Common myeloid progenitor, CD34-positive (primary cell): ENCODE measurements at regions of chr12 and their contacts with region 1.

Region 1: DNA sequence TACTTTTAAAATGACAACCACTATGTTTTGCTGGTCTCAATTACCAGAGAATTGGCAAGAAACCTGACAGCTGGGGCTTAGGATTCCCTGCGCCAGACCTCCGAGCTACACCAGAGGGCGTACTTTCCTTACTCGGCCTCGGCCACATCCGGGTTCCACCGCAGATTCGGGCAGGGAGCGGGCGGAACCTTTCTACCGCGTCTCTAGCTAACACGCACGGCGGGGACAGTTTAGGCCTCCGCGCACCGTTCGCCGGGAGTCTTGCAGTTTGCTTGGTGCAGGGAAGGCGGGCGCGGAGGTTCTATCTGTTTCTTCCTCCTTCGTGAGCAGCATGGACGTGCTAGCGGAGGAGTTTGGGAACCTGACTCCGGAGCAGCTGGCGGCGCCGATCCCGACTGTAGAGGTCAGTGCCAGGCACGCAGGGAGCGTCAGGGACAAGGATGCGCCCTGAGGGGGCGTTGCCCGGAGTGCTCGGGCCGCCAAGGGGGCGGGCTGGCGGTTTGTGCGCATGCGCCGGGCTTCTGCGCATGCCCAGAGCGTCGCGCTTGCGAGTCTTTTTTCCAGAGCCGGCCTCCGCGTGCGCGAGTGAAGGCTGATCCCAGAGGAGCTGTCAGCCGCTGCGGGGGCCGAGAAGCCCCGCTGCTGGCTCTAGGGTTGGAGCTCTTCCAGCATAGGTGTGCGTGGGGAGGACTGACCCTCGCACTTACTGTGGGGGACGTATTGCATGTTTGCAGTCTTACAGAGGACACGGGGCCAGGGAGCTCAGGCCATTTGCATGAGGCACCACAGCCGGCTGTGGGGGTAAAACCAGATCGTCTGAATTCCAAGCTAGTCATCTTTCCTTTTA is at the start of gene POLR3B:
- DNase-seq: peak; percentile 97 to 99 (median 99)
- H3K4me3 ChIP-seq: peak within 1 kb of the TSS; percentile 60 to 92 (median 82)
- H3K27ac ChIP-seq: peak within 1 kb of the TSS; percentile 71 to 83
- H3K4me1 ChIP-seq: peaks cover 10 to 20% (median 14%) of the 10 kb centered on the region in 4 experiments
- H3K27me3 ChIP-seq: peaks cover 0 to 4% (median 0%) of the 10 kb centered on the region in 5 experiments

Region 2: GRCh38 chr12:106074706-106075392 is 282.9 kb before region 1 on chr12:
- CTCF ChIA-PET with region 1: no interaction called
- POLR2A ChIA-PET with region 1: no interaction called
- DNase-seq: no peak
- H3K4me3 ChIP-seq: no peak overlapping the region
- H3K27ac ChIP-seq: no peak overlapping the region
- H3K4me1 ChIP-seq: no peaks in the 10 kb centered on the region
- H3K27me3 ChIP-seq: peaks cover 0 to 18% (median 6%) of the 10 kb centered on the region in 5 experiments

Region 3: GRCh38 chr12:106345739-106346138 is 12.0 kb before region 1 on chr12:
- CTCF ChIA-PET with region 1: interaction called, 12 read pairs
- POLR2A ChIA-PET with region 1: interaction called, 3 read pairs
- DNase-seq: peak; percentile 26 to 61 (median 59)
- H3K4me3 ChIP-seq: no peak overlapping the region
- H3K27ac ChIP-seq: no peak overlapping the region
- H3K4me1 ChIP-seq: no peaks in the 10 kb centered on the region
- H3K27me3 ChIP-seq: peaks cover 0 to 1% (median 0%) of the 10 kb centered on the region in 5 experiments

Region 4: DNA sequence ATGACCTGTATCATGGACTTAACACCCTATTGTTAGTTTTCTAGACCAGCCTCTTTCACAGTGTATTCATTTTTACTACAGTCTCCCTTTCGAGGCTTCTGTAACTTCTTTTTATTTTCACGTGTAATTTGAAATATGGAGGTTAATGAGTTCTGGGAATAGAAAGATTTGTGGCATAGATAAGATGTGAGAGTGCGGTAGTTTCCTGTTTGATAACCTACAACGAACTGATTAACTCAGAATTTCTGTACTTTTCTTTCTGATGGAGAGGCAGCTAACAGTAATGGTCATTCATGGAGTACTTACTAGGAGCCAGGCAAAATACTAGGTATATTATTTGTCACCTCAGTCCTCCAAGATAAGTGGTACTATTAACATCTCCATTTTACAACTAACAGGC is 21.0 kb after region 1 on chr12:
- CTCF ChIA-PET with region 1: interaction called, 13 read pairs
- POLR2A ChIA-PET with region 1: no interaction called
- DNase-seq: no peak
- H3K4me3 ChIP-seq: no peak overlapping the region
- H3K27ac ChIP-seq: no peak overlapping the region
- H3K4me1 ChIP-seq: peaks cover 0 to 11% (median 0%) of the 10 kb centered on the region in 4 experiments
- H3K27me3 ChIP-seq: no peaks in the 10 kb centered on the region

Region 5: DNA sequence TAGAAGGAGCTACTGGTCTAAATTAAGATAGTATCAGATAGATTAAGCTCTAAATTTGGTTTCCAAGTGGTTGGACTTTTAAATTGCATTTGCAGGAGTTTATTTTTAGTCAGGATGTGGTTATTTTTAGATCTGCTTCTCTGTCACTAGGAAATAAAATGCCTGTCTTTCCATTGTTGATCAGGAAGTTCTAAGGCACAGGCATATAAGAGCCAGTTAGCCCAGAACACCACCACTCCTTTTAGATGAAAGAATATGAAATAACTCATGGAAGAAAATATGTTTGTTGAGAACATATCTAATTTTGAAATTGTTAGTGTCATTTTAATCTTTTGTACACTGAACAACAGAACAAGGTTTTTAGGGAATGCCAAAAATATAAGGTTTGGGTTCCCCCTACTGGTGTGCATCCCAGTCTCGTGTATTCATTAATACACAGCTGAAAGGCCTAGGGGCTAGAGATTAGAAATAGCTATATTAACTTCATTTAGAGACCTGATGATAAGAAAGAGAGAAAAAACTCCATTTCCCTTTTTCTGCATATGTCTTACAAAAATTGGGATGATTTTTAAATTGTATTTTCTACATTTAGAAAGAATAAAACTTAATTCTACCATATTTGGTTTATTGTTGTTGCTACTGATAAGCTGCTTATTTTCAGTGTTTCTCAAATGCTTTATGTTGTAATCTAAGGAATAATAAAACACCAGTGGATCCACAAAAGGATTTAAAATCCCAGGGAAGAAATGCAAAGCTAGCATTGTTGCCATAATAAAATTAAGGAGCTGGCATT is 483.9 kb after region 1 on chr12:
- CTCF ChIA-PET with region 1: interaction called, 15 read pairs
- POLR2A ChIA-PET with region 1: no interaction called
- DNase-seq: peak; percentile 39 to 63 (median 54)
- H3K4me3 ChIP-seq: no peak overlapping the region
- H3K27ac ChIP-seq: no peak overlapping the region
- H3K4me1 ChIP-seq: peaks cover 8 to 23% (median 14%) of the 10 kb centered on the region in 4 experiments
- H3K27me3 ChIP-seq: no peaks in the 10 kb centered on the region

Region 6: GRCh38 chr12:106919910-106920544 is 562.3 kb after region 1 on chr12:
- CTCF ChIA-PET with region 1: interaction called, 32 read pairs
- POLR2A ChIA-PET with region 1: no interaction called
- DNase-seq: peak; percentile 57 to 73 (median 61)
- H3K4me3 ChIP-seq: no peak overlapping the region
- H3K27ac ChIP-seq: no peak overlapping the region
- H3K4me1 ChIP-seq: peaks cover 0 to under 1% (median under 1%) of the 10 kb centered on the region in 4 experiments
- H3K27me3 ChIP-seq: peaks cover 38 to 91% (median 48%) of the 10 kb centered on the region in 5 experiments